ENCODE measurements at regions of chr1 and their contacts with region 1.

Region 1: GRCh38 chr1:232704694-232705680 is 75.1 kb upstream of the SIPA1L2 start:
- DNase-seq: peak; percentile 88
- H3K4me3 ChIP-seq: no peak overlapping the region
- H3K27ac ChIP-seq: peak overlapping the region; percentile 52 to 65 (median 60)
- H3K4me1 ChIP-seq: peaks cover 0 to 27% (median 17%) of the 10 kb centered on the region in 4 donors
- H3K27me3 ChIP-seq: no peaks in the 10 kb centered on the region
- CTCF ChIP-seq: no peak
- EP300 ChIP-seq: peak in 3 of 4 donors; percentile 43 to 58 (median 45)
- POLR2A ChIP-seq: no peak

Region 2: GRCh38 chr1:232751393-232752140 is 46.6 kb after region 1 on chr1:
- intact Hi-C with region 1: no loop called
- DNase-seq: no peak
- H3K4me3 ChIP-seq: no peak overlapping the region
- H3K27ac ChIP-seq: peak overlapping the region in 1 of 4 donors; percentile 0
- H3K4me1 ChIP-seq: peaks cover 0 to 13% (median 0%) of the 10 kb centered on the region in 4 donors
- H3K27me3 ChIP-seq: no peaks in the 10 kb centered on the region
- CTCF ChIP-seq: no peak
- EP300 ChIP-seq: no peak
- POLR2A ChIP-seq: no peak

Region 3: GRCh38 chr1:232767305-232768074 is 62.5 kb after region 1 on chr1:
- intact Hi-C with region 1: loop called (anchors 5 kb)
- DNase-seq: peak; percentile 89
- H3K4me3 ChIP-seq: no peak overlapping the region
- H3K27ac ChIP-seq: peak overlapping the region; percentile 68 to 83 (median 71)
- H3K4me1 ChIP-seq: peaks cover 0 to 42% (median 25%) of the 10 kb centered on the region in 4 donors
- H3K27me3 ChIP-seq: no peaks in the 10 kb centered on the region
- CTCF ChIP-seq: no peak
- EP300 ChIP-seq: peak in 1 of 4 donors; percentile 61
- POLR2A ChIP-seq: no peak

Region 4: GRCh38 chr1:232844791-232845190 is 139.8 kb after region 1 on chr1:
- intact Hi-C with region 1: no loop called
- DNase-seq: no peak
- H3K4me3 ChIP-seq: no peak overlapping the region
- H3K27ac ChIP-seq: no peak overlapping the region
- H3K4me1 ChIP-seq: no peaks in the 10 kb centered on the region
- H3K27me3 ChIP-seq: no peaks in the 10 kb centered on the region
- CTCF ChIP-seq: no peak
- EP300 ChIP-seq: no peak
- POLR2A ChIP-seq: no peak